ENCODE measurements at regions of chr3 and their contacts with region 1.

Region 1: GRCh38 chr3:88149509-88150362 is at the start of gene C3orf38:
- DNase-seq: peak; percentile 61 to 90 (median 76)
- ATAC-seq: peak; percentile 94
- H3K4me3 ChIP-seq: peak within 1 kb of the TSS; percentile 87
- H3K4me3 Mint-ChIP-seq: peak within 1 kb of the TSS; percentile 99
- H3K27ac ChIP-seq: peak within 1 kb of the TSS; percentile 83 to 86
- H3K27ac Mint-ChIP-seq: peak within 1 kb of the TSS; percentile 99
- H3K4me1 ChIP-seq: peaks cover 19% of the 10 kb centered on the region
- H3K4me1 Mint-ChIP-seq: peaks cover 40% of the 10 kb centered on the region
- H3K27me3 ChIP-seq: no peaks in the 10 kb centered on the region
- H3K27me3 Mint-ChIP-seq: no peaks in the 10 kb centered on the region
- CTCF ChIP-seq: no peak
- total RNA-seq, gene C3orf38: 45.9 to 52.9 TPM

Region 2: GRCh38 chr3:86481031-86481430 is 1668.7 kb before region 1 on chr3:
- CTCF ChIA-PET with region 1: no interaction called
- POLR2A ChIA-PET with region 1: no interaction called
- intact Hi-C with region 1: no loop called
- DNase-seq: no peak
- ATAC-seq: no peak
- H3K4me3 ChIP-seq: no peak overlapping the region
- H3K4me3 Mint-ChIP-seq: no peak overlapping the region
- H3K27ac ChIP-seq: no peak overlapping the region
- H3K27ac Mint-ChIP-seq: no peak overlapping the region
- H3K4me1 ChIP-seq: no peaks in the 10 kb centered on the region
- H3K4me1 Mint-ChIP-seq: no peaks in the 10 kb centered on the region
- H3K27me3 ChIP-seq: no peaks in the 10 kb centered on the region
- H3K27me3 Mint-ChIP-seq: no peaks in the 10 kb centered on the region
- CTCF ChIP-seq: no peak

Region 3: GRCh38 chr3:87227104-87227834 is 922.5 kb before region 1 on chr3 and contains the start of gene CHMP2B:
- CTCF ChIA-PET with region 1: no interaction called
- POLR2A ChIA-PET with region 1: interaction called, 12 read pairs
- intact Hi-C with region 1: loop called in 1 of 2 experiments (anchors 5 kb)
- DNase-seq: peak; percentile 86 to 96 (median 90)
- ATAC-seq: peak; percentile 91
- H3K4me3 ChIP-seq: peak within 1 kb of the TSS; percentile 90
- H3K4me3 Mint-ChIP-seq: peak within 1 kb of the TSS; percentile 97
- H3K27ac ChIP-seq: peak within 1 kb of the TSS; percentile 65 to 85
- H3K27ac Mint-ChIP-seq: peak within 1 kb of the TSS; percentile 93
- H3K4me1 ChIP-seq: peaks cover 9% of the 10 kb centered on the region
- H3K4me1 Mint-ChIP-seq: peaks cover 53% of the 10 kb centered on the region
- H3K27me3 ChIP-seq: peaks cover 0 to 7% of the 10 kb centered on the region in 2 experiments
- H3K27me3 Mint-ChIP-seq: peaks cover 13% of the 10 kb centered on the region
- CTCF ChIP-seq: no peak
- total RNA-seq, gene CHMP2B: 24.7 to 31.5 TPM

Region 4: DNA sequence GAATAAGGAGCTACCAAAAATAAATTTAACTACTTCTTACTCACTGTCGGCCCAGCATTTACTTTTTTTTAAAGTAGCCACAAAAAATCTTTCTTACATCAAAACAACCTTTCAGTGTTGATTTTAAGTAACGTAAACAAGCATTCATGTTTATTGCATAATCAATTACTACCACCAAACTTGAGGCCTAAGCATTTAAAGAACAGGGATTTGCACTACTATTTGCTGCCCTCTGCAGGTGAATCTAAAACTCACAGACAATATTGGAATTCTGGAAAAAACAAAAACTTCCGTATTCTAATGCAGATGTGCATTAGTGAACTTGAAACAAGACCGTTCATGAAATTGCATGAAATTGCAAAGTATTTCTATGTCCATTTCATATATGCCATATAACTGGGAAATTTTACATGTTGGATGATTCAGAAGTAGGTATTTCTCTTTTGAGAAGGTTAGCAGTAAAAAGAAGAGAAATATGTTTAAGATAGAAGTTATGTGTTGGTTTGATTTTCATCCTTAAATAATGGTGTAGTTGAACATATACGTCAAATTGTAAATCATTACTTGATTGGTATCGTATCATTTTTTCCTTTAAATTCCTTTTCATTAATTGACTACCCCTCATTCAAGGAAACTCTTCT is 146.5 kb before region 1 on chr3:
- CTCF ChIA-PET with region 1: no interaction called
- POLR2A ChIA-PET with region 1: no interaction called
- intact Hi-C with region 1: no loop called
- DNase-seq: peak in 4 of 14 experiments; percentile 26 to 61 (median 53)
- ATAC-seq: no peak
- H3K4me3 ChIP-seq: no peak overlapping the region
- H3K4me3 Mint-ChIP-seq: no peak overlapping the region
- H3K27ac ChIP-seq: no peak overlapping the region
- H3K27ac Mint-ChIP-seq: no peak overlapping the region
- H3K4me1 ChIP-seq: no peaks in the 10 kb centered on the region
- H3K4me1 Mint-ChIP-seq: peaks cover 12% of the 10 kb centered on the region
- H3K27me3 ChIP-seq: no peaks in the 10 kb centered on the region
- H3K27me3 Mint-ChIP-seq: peaks cover 5% of the 10 kb centered on the region
- CTCF ChIP-seq: peak; percentile 88

Region 5: DNA sequence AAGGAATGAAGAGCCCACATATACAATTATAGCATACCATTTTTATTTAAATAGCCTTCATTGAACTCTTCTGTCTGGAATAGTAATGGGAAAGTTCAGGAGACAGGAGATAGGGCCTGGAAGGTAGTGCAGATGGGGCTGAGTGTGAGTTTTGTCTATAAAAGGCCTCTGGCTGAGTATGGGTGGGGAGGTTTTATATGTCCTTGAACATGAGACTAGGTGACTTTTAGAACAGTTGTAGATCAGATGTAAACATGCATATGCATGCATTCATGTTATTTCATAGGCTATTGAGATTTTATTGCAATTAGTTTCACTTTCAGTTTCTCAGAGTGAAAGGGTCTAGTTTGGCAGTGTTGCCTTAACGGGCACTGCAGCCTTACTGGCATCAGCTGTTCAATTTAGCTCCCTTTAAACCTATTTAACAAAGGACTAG is 118.1 kb before region 1 on chr3:
- CTCF ChIA-PET with region 1: no interaction called
- POLR2A ChIA-PET with region 1: interaction called, 22 read pairs
- intact Hi-C with region 1: no loop called
- DNase-seq: peak in 7 of 14 experiments; percentile 6 to 79 (median 42)
- ATAC-seq: peak; percentile 87
- H3K4me3 ChIP-seq: peak overlapping the region; percentile 53
- H3K4me3 Mint-ChIP-seq: peak overlapping the region; percentile 84
- H3K27ac ChIP-seq: peak overlapping the region; percentile 18 to 63
- H3K27ac Mint-ChIP-seq: peak overlapping the region; percentile 87
- H3K4me1 ChIP-seq: peaks cover 4% of the 10 kb centered on the region
- H3K4me1 Mint-ChIP-seq: peaks cover 48% of the 10 kb centered on the region
- H3K27me3 ChIP-seq: no peaks in the 10 kb centered on the region
- H3K27me3 Mint-ChIP-seq: no peaks in the 10 kb centered on the region
- CTCF ChIP-seq: no peak

Measured in CD4-positive, alpha-beta T cell (primary cell).